Body of pancreas (tissue), 4 donors: ENCODE measurements at regions of chr17 and their contacts with region 1.

Region 1: GRCh38 chr17:2380226-2380922 is 20.5 kb downstream of the MNT start:
- DNase-seq: no peak
- ATAC-seq: no peak
- H3K4me3 ChIP-seq: no peak overlapping the region
- H3K27ac ChIP-seq: no peak overlapping the region
- H3K4me1 ChIP-seq: peaks cover 7% of the 10 kb centered on the region
- H3K27me3 ChIP-seq: no peaks in the 10 kb centered on the region
- CTCF ChIP-seq: no peak
- POLR2A ChIP-seq: no peak

Region 2: DNA sequence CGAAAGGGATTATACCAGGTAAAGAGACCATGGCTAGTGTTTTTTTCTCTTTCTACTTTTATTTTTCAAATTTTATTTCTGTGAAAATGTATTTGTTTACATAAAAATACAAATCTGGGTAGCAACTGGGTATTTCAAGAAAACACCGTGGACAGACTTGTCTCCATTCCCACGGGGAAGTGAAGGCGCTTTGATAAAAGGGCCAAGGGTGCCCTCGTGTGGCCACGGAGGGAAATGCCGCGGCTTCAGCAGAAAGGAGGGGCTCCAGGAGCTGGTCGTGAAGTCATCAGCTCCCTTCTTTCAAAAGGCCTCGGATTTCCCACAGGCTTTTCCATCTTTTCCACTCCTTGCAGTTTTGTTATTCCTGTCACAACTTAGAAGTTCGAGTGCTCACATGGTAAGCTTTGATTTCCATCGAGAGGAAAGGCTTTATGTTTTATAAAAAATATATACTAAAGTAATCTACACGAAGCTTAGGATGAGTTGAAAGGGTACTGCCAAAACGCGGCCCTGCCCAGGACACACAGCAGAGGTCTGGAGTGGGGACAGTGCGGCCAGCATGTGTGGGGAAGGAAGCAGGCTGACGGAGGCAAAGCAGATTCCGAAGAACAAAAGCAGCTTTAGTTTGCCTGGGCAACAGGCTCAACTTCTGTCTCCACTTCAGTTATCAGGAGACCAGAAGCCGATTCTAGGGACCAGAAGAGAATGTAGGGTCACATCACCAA is 35.8 kb after region 1 on chr17:
- intact Hi-C with region 1: loop called (anchors 5 kb)
- DNase-seq: peak; percentile 90 to 96 (median 92)
- ATAC-seq: peak; percentile 73
- H3K4me3 ChIP-seq: no peak overlapping the region
- H3K27ac ChIP-seq: peak overlapping the region in 3 of 4 donors; percentile 17 to 61 (median 40)
- H3K4me1 ChIP-seq: peaks cover 44% of the 10 kb centered on the region
- H3K27me3 ChIP-seq: no peaks in the 10 kb centered on the region
- CTCF ChIP-seq: peak; percentile 91 to 99 (median 95)
- POLR2A ChIP-seq: no peak

Region 3: DNA sequence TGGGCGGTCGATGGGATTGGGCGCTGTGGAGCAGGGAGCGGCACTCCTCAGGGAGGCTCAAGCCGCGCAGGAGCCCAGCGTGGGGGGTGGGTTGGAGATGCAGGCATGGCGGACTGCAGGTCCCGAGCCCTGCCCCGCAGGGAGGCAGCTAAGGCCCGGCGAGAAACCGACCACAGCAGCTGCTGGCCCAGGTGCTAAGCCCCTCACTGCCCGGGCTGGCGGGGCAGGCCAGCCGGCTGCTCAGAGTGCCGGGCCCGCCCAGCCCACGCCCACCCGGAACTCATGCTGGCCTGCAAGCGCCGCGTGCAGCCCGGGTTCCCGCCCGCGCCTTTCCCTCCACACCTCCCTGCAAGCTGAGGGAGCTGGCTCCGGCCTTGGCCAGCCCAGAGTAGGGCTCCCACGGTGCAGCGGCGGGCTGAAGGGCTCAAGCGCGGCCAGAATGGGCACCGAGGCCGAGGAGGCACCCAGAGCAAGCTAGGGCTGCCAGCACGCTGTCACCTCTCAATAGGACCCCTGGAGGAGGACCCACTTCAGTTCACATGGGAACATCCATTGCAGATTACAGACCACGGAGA is 151.9 kb after region 1 on chr17:
- intact Hi-C with region 1: no loop called
- DNase-seq: no peak
- ATAC-seq: no peak
- H3K4me3 ChIP-seq: no peak overlapping the region
- H3K27ac ChIP-seq: no peak overlapping the region
- H3K4me1 ChIP-seq: no peaks in the 10 kb centered on the region
- H3K27me3 ChIP-seq: no peaks in the 10 kb centered on the region
- CTCF ChIP-seq: no peak
- POLR2A ChIP-seq: no peak